IMR-90 (cell line): ENCODE measurements at regions of chr3 and their contacts with region 1.

Region 1: GRCh38 chr3:142418926-142419592 is 28.8 kb downstream of the XRN1 start:
- DNase-seq: no peak
- ATAC-seq: no peak
- H3K4me3 ChIP-seq: no peak overlapping the region
- H3K27ac ChIP-seq: no peak overlapping the region
- H3K4me1 ChIP-seq: no peaks in the 10 kb centered on the region
- H3K27me3 ChIP-seq: no peaks in the 10 kb centered on the region
- CTCF ChIP-seq: no peak
- POLR2A ChIP-seq: no peak
- RAD21 ChIP-seq: no peak

Region 2: GRCh38 chr3:142374687-142375086 is 44.4 kb before region 1 on chr3:
- CTCF ChIA-PET with region 1: no interaction called
- POLR2A ChIA-PET with region 1: no interaction called
- dilution Hi-C with region 1: no loop called
- in situ Hi-C with region 1: no loop called
- intact Hi-C with region 1: loop called (anchors 5 kb)
- DNase-seq: no peak
- ATAC-seq: no peak
- H3K4me3 ChIP-seq: no peak overlapping the region
- H3K27ac ChIP-seq: no peak overlapping the region
- H3K4me1 ChIP-seq: no peaks in the 10 kb centered on the region
- H3K27me3 ChIP-seq: no peaks in the 10 kb centered on the region
- CTCF ChIP-seq: no peak
- POLR2A ChIP-seq: no peak
- RAD21 ChIP-seq: no peak

Region 3: DNA sequence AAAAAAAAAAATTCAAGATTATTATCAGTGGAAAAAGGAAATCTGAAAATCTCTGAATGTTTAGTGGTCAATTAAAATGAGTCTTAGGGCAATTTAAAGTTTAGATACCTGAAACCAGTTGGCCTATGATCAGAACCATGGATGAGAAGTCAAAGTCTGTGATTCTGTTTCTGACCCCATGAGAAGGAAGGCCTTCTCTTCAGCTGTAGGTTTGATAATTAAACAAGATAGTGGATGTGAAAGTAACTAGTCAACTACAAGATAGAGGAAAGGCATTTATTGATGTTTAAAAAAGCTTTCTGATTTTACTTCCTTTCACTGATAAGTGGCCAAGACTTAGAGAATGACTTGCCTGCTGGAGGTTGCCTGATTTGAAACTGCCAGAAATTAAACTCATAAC is 185.9 kb after region 1 on chr3:
- CTCF ChIA-PET with region 1: interaction called, 11 read pairs
- POLR2A ChIA-PET with region 1: no interaction called
- dilution Hi-C with region 1: no loop called
- in situ Hi-C with region 1: no loop called
- intact Hi-C with region 1: no loop called
- DNase-seq: no peak
- ATAC-seq: no peak
- H3K4me3 ChIP-seq: no peak overlapping the region
- H3K27ac ChIP-seq: no peak overlapping the region
- H3K4me1 ChIP-seq: no peaks in the 10 kb centered on the region
- H3K27me3 ChIP-seq: peaks cover 4% of the 10 kb centered on the region
- CTCF ChIP-seq: no peak
- POLR2A ChIP-seq: no peak
- RAD21 ChIP-seq: no peak